ENCODE measurements at regions of chr1 and their contacts with region 1.

Region 1: DNA sequence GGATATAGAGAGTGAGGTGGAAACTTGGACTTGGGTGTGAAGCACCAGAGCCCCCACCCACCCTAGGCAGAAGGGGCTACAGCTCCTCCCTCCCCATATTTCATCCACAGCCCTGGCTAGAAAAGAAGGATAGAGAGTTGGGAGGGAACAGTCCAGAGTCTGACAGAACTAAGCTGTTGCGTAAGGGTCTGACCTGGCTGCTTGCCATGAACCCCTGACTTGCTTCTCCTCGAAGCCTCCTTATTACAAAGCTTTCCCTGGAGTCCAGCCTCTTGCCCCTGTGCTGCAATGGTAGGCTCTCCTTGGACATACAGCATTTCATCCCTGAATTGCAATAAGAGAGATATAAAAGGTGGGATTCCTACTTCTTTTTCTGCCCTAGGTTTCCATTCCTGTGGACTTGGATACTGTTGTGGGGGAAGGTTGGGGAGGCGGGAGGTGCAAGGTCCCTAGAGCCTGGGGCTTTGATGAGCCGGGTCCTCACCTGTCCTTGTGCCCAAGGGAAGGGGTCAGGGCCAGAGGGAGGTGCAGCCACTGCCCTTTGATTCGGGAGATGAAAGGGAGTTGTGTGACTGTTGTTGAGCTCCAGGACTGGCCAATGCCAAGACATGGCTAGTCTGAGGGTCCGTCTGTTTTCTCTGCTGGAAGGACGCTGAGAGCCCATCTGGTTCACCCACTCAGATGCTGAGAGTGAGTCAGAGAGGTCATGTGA is 2.7 kb downstream of the RHBG start:
- DNase-seq: no peak
- H3K4me3 ChIP-seq: no peak overlapping the region
- CTCF ChIP-seq: no peak

Region 2: DNA sequence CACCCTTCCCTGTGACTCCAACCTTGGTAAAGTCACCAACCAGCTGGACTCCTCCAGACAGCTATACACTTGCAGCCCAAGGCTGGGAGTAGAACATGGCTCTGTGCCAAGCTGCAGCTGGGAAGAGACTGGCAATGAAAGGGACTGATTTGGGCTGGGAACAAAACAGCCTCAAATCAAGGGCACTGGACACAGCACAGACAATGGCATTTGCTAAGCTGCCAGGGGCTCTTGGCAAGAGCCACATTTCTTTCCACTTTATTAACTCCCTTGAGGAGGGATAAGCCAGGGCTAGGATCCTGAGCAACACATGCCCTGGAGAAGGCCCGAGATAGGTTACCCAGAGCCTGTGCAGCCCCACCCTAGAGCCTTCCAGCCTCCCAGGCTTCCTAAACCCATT is 500.3 kb before region 1 on chr1:
- in situ Hi-C with region 1: no loop called
- DNase-seq: no peak
- H3K4me3 ChIP-seq: no peak overlapping the region
- CTCF ChIP-seq: no peak

Region 3: GRCh38 chr1:156434989-156435544 is 63.4 kb after region 1 on chr1:
- in situ Hi-C with region 1: loop called (anchors 5 kb)
- DNase-seq: no peak
- H3K4me3 ChIP-seq: peak overlapping the region; percentile 26
- CTCF ChIP-seq: no peak

Measured in astrocyte of the cerebellum (primary cell).